H1 (cell line): ENCODE measurements at regions of chr4 and their contacts with region 1.

Region 1: GRCh38 chr4:123776254-123776653 is 379.7 kb downstream of the SPRY1 start:
- DNase-seq: no peak
- H3K4me3 ChIP-seq: no peak overlapping the region
- H3K27ac ChIP-seq: no peak overlapping the region
- H3K4me1 ChIP-seq: no peaks in the 10 kb centered on the region
- H3K27me3 ChIP-seq: no peaks in the 10 kb centered on the region
- CTCF ChIP-seq: no peak
- EP300 ChIP-seq: no peak
- POLR2A ChIP-seq: no peak
- RAD21 ChIP-seq: no peak

Region 2: DNA sequence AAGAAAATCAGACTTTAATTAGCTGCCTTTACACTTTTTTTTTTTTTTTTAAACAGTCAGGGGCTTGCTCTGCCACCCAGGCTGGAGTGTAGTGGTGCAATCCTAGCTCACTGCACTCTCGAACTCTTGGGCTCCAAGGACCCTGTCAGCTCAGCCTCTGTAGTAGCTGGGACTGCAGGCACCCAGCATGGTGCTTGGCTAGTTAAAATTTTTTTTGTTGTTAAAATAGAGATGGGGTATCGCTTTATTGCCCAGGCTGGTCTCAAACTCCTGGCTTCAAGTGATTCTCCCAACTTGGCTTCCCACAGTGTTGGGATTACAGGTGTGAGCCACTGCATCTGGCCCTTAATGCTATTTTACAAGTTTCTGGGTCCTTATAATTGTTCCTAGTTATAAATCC is 20.6 kb before region 1 on chr4:
- CTCF ChIA-PET with region 1: interaction called, 23 read pairs
- POLR2A ChIA-PET with region 1: no interaction called
- DNase-seq: no peak
- H3K4me3 ChIP-seq: no peak overlapping the region
- H3K27ac ChIP-seq: no peak overlapping the region
- H3K4me1 ChIP-seq: peaks cover 0 to 2% (median 0%) of the 10 kb centered on the region in 4 experiments; a peak in 1 of 7 replicates
- H3K27me3 ChIP-seq: no peaks in the 10 kb centered on the region
- CTCF ChIP-seq: no peak
- EP300 ChIP-seq: no peak
- POLR2A ChIP-seq: no peak
- RAD21 ChIP-seq: no peak

Region 3: GRCh38 chr4:124111922-124112321 is 335.7 kb after region 1 on chr4:
- CTCF ChIA-PET with region 1: interaction called, 25 read pairs
- POLR2A ChIA-PET with region 1: no interaction called
- DNase-seq: peak in 1 of 2 experiments; percentile 10
- H3K4me3 ChIP-seq: no peak overlapping the region
- H3K27ac ChIP-seq: no peak overlapping the region
- H3K4me1 ChIP-seq: no peaks in the 10 kb centered on the region
- H3K27me3 ChIP-seq: no peaks in the 10 kb centered on the region
- CTCF ChIP-seq: peak in 2 of 3 experiments; percentile 64 to 77; a peak in 3 of 4 replicates
- EP300 ChIP-seq: no peak
- POLR2A ChIP-seq: no peak
- RAD21 ChIP-seq: peak; percentile 96 to 98